Activated CD4-positive, alpha-beta T cell treated with anti-CD3 and anti-CD28 coated beads for 36 hours (primary cell): ENCODE measurements at regions of chr5 and their contacts with region 1.

Region 1: DNA sequence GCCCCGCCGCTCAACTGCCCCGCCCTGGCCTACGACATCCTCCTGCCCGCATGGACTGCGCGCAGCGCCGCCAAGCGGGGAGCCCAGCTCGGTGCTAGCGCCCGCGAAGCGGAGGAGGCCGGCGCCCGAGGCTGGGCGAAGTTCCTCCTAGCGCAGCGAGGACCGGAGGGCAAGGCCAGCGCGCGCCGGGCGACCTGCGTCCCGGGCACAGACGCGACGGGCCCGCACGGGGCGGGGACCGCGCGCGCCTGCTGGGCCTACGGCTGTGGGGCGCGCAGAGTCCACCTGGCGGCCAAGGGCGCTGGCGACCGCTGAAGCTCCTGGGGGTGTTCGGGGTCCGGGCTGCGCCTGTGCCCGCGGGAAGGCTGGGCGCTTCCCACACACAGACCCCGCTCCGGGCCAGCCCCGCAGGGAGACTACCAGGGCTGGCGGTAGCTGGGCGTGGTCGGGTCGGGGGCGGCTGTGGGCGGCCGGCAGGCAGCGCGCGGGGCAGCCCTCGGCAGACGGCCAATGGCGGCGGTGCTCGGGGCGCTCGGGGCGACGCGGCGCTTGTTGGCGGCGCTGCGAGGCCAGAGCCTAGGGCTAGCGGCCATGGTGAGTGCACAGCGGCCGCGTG is at the start of gene PCBD2:
- DNase-seq: peak; percentile 97
- ATAC-seq: peak; percentile 89
- H3K4me3 Mint-ChIP-seq: peak within 1 kb of the TSS; percentile 95
- H3K27ac Mint-ChIP-seq: peak within 1 kb of the TSS; percentile 98
- H3K4me1 Mint-ChIP-seq: peaks cover 17% of the 10 kb centered on the region
- H3K27me3 Mint-ChIP-seq: no peaks in the 10 kb centered on the region
- total RNA-seq, gene PCBD2: 10.0 to 12.8 TPM

Region 2: DNA sequence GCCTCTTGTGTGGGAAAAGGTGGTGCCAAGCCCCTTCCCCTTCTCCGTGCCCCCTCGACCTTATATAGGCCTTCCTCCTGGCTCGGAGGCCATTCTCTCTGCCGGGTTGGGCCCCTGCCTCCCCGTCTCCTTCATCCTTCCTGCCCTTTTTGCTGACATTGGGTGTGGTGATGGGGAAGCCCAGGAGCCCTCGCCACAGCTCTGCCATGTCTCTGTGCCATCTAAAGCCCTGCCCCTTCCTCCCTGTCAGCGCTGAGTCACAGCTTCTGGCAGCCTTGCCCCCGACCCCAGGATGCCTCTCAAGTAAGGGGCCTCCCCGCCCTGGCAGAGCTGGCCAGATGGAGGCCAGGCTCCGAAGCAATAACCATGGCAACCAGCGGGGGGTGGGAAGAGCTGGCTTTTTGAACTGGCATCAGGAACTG is 348.8 kb before region 1 on chr5:
- CTCF ChIA-PET with region 1: no interaction called
- POLR2A ChIA-PET with region 1: no interaction called
- intact Hi-C with region 1: loop called in 1 of 2 experiments (anchors 1 kb)
- DNase-seq: peak; percentile 96
- ATAC-seq: peak; percentile 97
- H3K4me3 Mint-ChIP-seq: peak overlapping the region; percentile 72
- H3K27ac Mint-ChIP-seq: peak overlapping the region; percentile 99
- H3K4me1 Mint-ChIP-seq: peaks cover 38% of the 10 kb centered on the region
- H3K27me3 Mint-ChIP-seq: no peaks in the 10 kb centered on the region

Region 3: DNA sequence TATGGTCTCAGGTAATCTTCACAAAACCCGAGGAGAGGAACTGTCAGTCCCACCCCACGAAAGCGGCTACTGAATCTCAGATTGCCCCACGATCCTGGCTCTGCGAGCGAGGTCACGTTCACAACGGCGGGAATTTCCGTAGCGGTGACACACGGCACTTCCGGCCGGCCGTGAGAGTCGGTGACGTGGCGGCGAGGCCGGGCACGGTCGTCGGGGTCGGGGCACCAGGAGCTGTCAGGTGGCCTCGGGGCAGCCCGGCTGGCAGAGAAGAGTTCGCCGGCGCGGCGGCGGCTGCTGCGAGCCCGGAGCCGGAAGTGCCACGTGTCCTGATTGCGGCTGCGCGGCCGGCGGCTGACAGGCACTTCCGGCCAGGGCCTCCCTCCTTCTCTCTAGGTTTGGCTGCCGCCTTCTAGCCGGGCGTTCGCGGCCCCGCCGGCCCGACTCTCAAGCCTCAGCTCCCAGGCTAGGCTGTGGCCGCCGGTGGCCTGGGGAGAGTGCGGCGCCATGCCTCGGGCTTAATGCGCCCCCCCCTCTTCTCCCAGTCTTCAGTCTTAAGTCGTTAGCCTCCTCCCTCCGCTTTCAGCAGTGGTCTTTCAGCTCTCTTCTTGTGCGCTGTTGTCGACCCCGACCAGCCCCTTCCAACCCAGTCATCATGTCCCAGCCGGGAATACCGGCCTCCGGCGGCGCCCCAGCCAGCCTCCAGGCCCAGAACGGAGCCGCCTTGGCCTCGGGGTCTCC is 256.1 kb before region 1 on chr5 and contains the start of gene SEC24A:
- CTCF ChIA-PET with region 1: no interaction called
- POLR2A ChIA-PET with region 1: no interaction called
- intact Hi-C with region 1: loop called in 1 of 2 experiments (anchors 1 kb)
- DNase-seq: peak; percentile 96
- ATAC-seq: peak; percentile 88
- H3K4me3 Mint-ChIP-seq: peak within 1 kb of the TSS; percentile 87
- H3K27ac Mint-ChIP-seq: peak within 1 kb of the TSS; percentile 99
- H3K4me1 Mint-ChIP-seq: peaks cover 30% of the 10 kb centered on the region
- H3K27me3 Mint-ChIP-seq: no peaks in the 10 kb centered on the region
- total RNA-seq, gene SEC24A: 32.2 to 41.3 TPM

Region 4: GRCh38 chr5:134784241-134784920 is 120.4 kb before region 1 on chr5:
- CTCF ChIA-PET with region 1: interaction called, 4 read pairs
- POLR2A ChIA-PET with region 1: no interaction called
- intact Hi-C with region 1: loop called in 1 of 2 experiments (anchors 1 kb)
- DNase-seq: no peak
- ATAC-seq: no peak
- H3K4me3 Mint-ChIP-seq: no peak overlapping the region
- H3K27ac Mint-ChIP-seq: no peak overlapping the region
- H3K4me1 Mint-ChIP-seq: no peaks in the 10 kb centered on the region
- H3K27me3 Mint-ChIP-seq: no peaks in the 10 kb centered on the region

Region 5: DNA sequence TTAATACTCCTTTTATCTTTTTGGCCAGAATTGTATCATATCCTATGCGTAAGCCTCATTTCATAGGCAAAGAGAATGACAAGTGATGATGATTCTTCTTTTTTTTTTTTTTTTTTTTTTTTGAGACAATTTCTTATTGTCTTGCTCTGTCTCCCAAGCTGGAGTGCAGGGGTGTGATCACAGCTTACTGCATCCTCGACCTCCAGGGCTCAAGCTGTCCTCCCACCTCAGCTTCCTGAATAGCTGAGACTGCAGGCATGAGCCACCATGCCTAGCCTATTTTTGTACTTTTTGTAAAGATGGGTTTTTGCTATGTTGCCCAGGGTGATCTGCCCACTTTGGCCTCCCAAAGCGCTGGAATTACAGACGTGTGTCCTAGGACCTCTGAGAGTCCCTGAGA is 100.9 kb before region 1 on chr5:
- CTCF ChIA-PET with region 1: no interaction called
- POLR2A ChIA-PET with region 1: no interaction called
- intact Hi-C with region 1: no loop called
- DNase-seq: no peak
- ATAC-seq: no peak
- H3K4me3 Mint-ChIP-seq: no peak overlapping the region
- H3K27ac Mint-ChIP-seq: no peak overlapping the region
- H3K4me1 Mint-ChIP-seq: no peaks in the 10 kb centered on the region
- H3K27me3 Mint-ChIP-seq: no peaks in the 10 kb centered on the region

Region 6: GRCh38 chr5:134873987-134874830 is 30.5 kb before region 1 on chr5 and contains the start of gene TXNDC15:
- CTCF ChIA-PET with region 1: interaction called, 11 read pairs
- POLR2A ChIA-PET with region 1: interaction called, 7 read pairs
- intact Hi-C with region 1: loop called (anchors 1 kb)
- DNase-seq: peak; percentile 90
- ATAC-seq: peak; percentile 83
- H3K4me3 Mint-ChIP-seq: peak within 1 kb of the TSS; percentile 88
- H3K27ac Mint-ChIP-seq: peak within 1 kb of the TSS; percentile 97
- H3K4me1 Mint-ChIP-seq: peaks cover 37% of the 10 kb centered on the region
- H3K27me3 Mint-ChIP-seq: no peaks in the 10 kb centered on the region
- total RNA-seq, gene TXNDC15: 16.6 to 29.1 TPM

Region 7: DNA sequence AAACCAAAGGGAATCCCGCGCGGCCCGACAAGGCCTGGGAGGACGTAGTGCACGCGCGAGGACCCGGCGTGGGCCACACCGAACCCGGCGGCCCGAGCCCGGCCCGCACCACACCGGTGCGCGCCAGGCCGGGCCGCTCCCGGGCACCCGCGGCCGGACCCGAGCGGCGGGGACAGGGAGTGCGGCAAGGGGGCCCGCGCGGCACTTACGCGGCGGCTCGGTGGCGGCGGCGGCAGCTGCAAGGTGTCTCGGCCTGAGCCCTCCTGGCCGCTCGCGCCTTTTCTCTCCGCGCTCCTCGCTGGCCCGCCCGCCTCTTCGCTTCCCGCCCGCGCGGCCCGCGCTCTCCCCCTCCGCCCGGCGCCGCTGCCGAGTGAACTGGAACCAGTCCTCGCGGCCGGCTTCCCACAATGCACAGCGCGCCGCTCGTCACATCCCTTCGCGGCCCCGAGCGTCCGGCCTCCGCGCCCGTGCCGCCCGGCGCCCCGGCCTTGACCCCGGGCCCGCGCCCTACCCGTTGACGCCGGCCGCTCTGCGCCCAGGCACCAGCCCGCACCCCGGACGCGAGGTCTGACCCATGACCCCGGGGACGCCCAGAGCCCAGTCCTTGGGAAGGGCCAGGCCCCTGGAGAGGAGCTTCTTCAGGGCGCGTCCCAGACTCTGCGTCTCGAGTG is 494.2 kb after region 1 on chr5 and contains the start of gene MACROH2A1:
- CTCF ChIA-PET with region 1: no interaction called
- POLR2A ChIA-PET with region 1: no interaction called
- intact Hi-C with region 1: loop called in 1 of 2 experiments (anchors 5 kb)
- DNase-seq: peak; percentile 92
- ATAC-seq: peak; percentile 88
- H3K4me3 Mint-ChIP-seq: peak within 1 kb of the TSS; percentile 86
- H3K27ac Mint-ChIP-seq: peak within 1 kb of the TSS; percentile 91
- H3K4me1 Mint-ChIP-seq: peaks cover 41% of the 10 kb centered on the region
- H3K27me3 Mint-ChIP-seq: no peaks in the 10 kb centered on the region
- total RNA-seq, gene MACROH2A1: 159 to 190 TPM